A673 (cell line): ENCODE measurements at regions of chr5 and their contacts with region 1.

Region 1: GRCh38 chr5:86880785-86881492 is 263.2 kb downstream of the COX7C start:
- DNase-seq: peak; percentile 86
- H3K4me3 ChIP-seq: no peak overlapping the region
- H3K27ac ChIP-seq: no peak overlapping the region
- H3K4me1 ChIP-seq: no peaks in the 10 kb centered on the region
- H3K27me3 ChIP-seq: no peaks in the 10 kb centered on the region
- CTCF ChIP-seq: peak; percentile 86

Region 2: GRCh38 chr5:87008751-87009560 is 128.0 kb after region 1 on chr5:
- CTCF ChIA-PET with region 1: interaction called, 3 read pairs
- POLR2A ChIA-PET with region 1: no interaction called
- intact Hi-C with region 1: loop called (anchors 2 kb)
- DNase-seq: peak; percentile 46
- H3K4me3 ChIP-seq: no peak overlapping the region
- H3K27ac ChIP-seq: no peak overlapping the region
- H3K4me1 ChIP-seq: peaks cover 4% of the 10 kb centered on the region
- H3K27me3 ChIP-seq: no peaks in the 10 kb centered on the region
- CTCF ChIP-seq: no peak